Activated naive CD8-positive, alpha-beta T cell treated with anti-CD3 and anti-CD28 coated beads, Interleukin-2, amount 10 ng/mL, durations not matched to agents 7 days and 5 days (primary cell): ENCODE measurements at regions of chr2 and their contacts with region 1.

Region 1: DNA sequence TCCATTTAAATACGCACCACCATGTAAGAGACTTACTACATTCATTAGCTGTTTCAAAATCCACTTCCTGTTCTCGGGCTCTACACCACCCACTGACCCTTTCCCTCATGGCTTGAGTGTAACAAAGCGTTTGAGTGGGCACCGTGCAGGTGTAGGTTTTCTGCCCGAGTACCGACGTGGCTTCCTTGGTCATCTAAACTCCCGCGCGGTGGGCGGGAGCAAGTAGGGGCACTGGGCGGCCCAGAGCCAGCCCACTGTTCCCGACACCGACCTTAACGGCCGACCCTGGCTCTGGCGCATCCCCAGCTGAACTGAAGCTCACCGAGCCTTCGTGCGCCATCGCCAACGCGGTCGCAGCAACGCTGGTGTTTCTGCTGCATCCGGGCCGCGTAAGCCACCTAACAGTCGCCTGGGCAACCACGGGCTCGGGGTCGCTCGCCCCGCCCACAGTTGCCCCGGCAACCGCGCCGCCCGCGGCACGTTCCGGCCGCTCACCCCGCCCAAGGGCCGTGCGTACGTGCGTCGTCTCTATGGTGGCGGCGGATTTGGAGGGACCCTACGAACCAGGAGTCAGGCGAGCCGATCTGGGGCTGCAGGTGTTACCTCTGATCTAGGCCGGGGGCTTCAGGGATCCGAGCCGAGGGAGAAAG is at the starts of genes C2orf81 and WDR54:
- DNase-seq: peak; percentile 99
- ATAC-seq: peak; percentile 80
- H3K4me3 Mint-ChIP-seq: peak within 1 kb of the TSS; percentile 99
- H3K27ac Mint-ChIP-seq: peak within 1 kb of the TSS; percentile 99
- H3K4me1 Mint-ChIP-seq: peaks cover 19% of the 10 kb centered on the region
- H3K27me3 Mint-ChIP-seq: no peaks in the 10 kb centered on the region
- total RNA-seq, gene C2orf81: 3.7 to 5.8 TPM
- total RNA-seq, gene WDR54: 88.9 to 94.4 TPM

Region 2: DNA sequence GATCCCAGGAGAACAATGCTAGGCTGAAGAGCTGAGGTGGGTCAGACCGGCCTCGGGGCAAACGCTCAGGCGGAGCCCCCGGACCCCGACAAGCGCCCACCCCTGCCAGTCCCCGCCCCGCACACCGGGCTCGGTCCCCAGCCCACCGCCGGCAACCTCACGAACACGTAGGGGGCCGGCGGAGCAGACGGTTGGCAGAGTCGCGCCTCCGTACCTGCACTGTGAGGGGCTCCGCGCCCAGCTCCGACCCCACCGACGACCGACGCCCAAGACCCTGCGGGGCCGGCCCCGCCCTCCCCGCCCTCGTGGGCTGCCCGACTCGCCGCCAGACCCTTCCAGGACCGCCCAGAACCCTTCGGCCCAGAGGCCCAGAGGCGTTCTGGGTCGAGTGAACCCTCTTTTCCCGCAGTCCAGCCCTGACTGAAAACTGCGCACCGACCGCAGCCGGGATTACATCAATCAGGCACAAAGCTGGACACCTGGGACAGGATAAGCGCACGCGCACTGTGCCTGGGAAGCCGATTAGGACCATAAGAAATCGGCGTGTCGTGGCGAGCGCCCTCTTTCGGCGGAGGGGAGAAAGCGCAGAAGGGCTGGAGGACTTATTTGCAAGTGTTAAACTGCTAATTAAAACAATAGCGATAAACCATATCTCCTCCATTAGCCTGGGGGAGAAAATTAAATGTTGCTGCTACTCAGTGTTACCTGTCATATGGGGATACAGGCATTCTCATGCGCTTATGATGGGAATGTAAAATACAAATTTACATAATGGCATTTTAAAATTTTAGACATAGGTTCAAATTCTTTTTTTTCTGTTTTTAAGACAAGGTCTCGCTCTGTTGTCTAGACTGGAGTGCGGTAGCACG is 29.5 kb before region 1 on chr2:
- POLR2A ChIA-PET with region 1: interaction called, 14 read pairs
- DNase-seq: peak; percentile 97
- ATAC-seq: peak; percentile 85
- H3K4me3 Mint-ChIP-seq: peak overlapping the region; percentile 90
- H3K27ac Mint-ChIP-seq: peak overlapping the region; percentile 99
- H3K4me1 Mint-ChIP-seq: peaks cover 4% of the 10 kb centered on the region
- H3K27me3 Mint-ChIP-seq: peaks cover 5% of the 10 kb centered on the region

Region 3: DNA sequence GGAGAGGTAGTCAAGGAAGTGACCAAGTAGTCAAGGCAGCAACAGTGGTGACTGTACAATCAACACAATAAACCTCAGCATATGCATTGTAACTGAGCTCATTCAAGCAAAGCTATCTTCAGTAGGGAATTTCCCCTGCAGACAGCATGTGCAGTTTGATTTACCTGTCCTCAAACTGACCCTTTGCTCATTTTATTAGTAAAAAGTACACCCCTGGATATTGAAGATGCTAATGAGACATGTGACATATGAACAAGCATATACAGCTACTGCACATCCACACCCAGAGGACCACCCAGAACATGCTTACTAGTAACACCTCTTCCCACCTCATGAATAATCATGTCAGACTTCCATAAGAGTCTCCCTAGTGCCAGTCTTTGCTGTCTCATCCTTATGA is 15.3 kb before region 1 on chr2:
- POLR2A ChIA-PET with region 1: no interaction called
- DNase-seq: no peak
- ATAC-seq: no peak
- H3K4me3 Mint-ChIP-seq: no peak overlapping the region
- H3K27ac Mint-ChIP-seq: no peak overlapping the region
- H3K4me1 Mint-ChIP-seq: peaks cover 4% of the 10 kb centered on the region
- H3K27me3 Mint-ChIP-seq: peaks cover 27% of the 10 kb centered on the region

Region 4: GRCh38 chr2:74450570-74451190 is 29.3 kb after region 1 on chr2:
- POLR2A ChIA-PET with region 1: interaction called, 58 read pairs
- DNase-seq: no peak
- ATAC-seq: no peak
- H3K4me3 Mint-ChIP-seq: no peak overlapping the region
- H3K27ac Mint-ChIP-seq: no peak overlapping the region
- H3K4me1 Mint-ChIP-seq: peaks cover 25% of the 10 kb centered on the region
- H3K27me3 Mint-ChIP-seq: peaks cover 12% of the 10 kb centered on the region